ENCODE measurements at regions of chr22 and their contacts with region 1.

Region 1: DNA sequence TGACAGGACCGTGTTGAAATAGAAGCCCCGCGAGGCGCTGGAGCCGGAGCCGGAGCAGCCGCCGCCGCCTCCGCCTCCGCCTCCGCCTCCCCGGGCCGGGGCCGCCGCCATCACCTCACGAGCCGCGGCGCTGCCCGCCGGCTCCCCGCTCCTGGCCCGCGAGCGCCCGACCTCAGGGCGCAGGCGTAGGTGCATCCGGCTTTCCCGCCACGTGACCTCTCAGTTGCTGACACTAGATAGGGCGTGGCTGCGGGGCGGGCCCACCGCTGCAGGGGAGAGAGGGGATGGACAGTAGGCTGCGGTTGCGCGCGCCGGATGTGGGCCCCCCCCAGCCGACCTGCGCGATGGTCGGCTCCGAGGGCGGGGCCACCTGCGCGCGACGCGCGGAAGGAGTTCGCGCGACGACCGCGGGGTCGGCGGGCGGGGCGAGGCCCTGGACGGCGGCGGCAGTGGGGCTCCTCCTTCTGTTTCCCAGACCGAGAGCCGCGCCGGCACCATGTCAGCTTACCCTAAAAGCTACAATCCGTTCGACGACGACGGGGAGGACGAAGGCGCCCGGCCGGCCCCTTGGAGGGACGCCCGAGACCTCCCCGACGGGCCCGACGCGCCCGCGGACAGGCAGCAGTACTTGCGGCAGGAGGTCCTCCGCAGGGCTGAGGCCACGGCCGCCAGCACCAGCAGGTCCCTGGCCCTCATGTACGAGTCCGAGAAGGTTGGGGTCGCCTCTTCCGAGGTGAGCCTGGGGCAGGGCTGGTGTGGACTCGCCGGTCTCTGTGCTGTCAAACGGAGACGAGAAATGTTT is at the starts of genes PI4KA and SNAP29:
- DNase-seq: peak; percentile 100
- ATAC-seq: peak; percentile 92
- H3K4me3 ChIP-seq: peak within 1 kb of the TSS; percentile 57
- H3K27ac ChIP-seq: peak within 1 kb of the TSS; percentile 79
- H3K4me1 ChIP-seq: peaks cover 53 to 78% of the 10 kb centered on the region in 2 experiments
- H3K27me3 ChIP-seq: no peaks in the 10 kb centered on the region
- CTCF ChIP-seq: peak in 1 of 3 experiments; percentile 42; a peak in 2 of 6 replicates
- EP300 ChIP-seq: peak; percentile 84
- POLR2A ChIP-seq: no peak
- RAD21 ChIP-seq: no peak
- polyA plus RNA-seq, gene PI4KA: 7.3 to 11.1 TPM
- polyA plus RNA-seq, gene SNAP29: 19.5 to 22.8 TPM

Region 2: DNA sequence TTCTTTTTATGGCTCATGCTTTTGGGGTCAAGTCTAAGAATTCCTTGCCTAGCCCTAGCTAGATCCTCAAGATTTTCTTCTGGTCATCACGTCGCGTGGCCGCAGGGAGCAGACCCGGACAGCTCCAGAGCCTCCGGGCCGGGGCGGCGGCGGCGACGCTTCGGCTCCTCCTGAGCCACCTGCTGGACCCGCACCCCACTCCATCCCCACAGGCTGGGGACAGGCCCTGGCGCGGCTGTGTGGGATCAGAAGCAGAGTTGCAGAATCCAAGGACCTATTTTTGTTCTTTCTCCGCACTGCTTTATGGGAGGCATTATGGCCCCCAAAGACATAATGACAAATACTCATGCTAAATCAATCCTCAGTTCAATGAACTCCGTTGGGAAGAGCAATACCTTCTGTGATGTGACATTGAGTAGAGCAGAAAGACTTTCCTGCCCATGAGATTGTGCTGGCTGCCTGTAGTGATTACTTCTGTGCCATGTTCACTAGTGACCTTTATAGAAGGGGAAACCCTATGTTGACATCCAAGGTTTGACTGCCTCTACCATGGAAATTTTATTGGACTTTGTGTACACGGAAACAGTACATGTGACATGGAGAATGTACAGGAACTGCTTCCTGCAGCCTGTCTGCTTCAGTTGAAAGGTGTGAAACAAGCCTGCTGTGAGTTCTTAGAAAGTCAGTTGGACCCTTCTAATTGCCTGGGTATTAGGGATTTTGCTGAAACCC is 408.8 kb before region 1 on chr22:
- CTCF ChIA-PET with region 1: no interaction called
- POLR2A ChIA-PET with region 1: no interaction called
- in situ Hi-C with region 1: no loop called
- intact Hi-C with region 1: no loop called
- DNase-seq: no peak
- ATAC-seq: peak; percentile 17; the same call in 1 of the 3 replicates
- H3K4me3 ChIP-seq: no peak overlapping the region
- H3K27ac ChIP-seq: no peak overlapping the region
- H3K4me1 ChIP-seq: peaks cover 0 to 6% of the 10 kb centered on the region in 2 experiments; a peak in 1 of 5 replicates
- H3K27me3 ChIP-seq: peaks cover 26 to 41% of the 10 kb centered on the region in 2 experiments; a peak in 4 of 5 replicates
- CTCF ChIP-seq: 0 out of 6 replicates have a peak, but pooled peaks of 1 of the 3 experiments have one; percentile 10
- EP300 ChIP-seq: no peak
- POLR2A ChIP-seq: no peak
- RAD21 ChIP-seq: no peak

Region 3: DNA sequence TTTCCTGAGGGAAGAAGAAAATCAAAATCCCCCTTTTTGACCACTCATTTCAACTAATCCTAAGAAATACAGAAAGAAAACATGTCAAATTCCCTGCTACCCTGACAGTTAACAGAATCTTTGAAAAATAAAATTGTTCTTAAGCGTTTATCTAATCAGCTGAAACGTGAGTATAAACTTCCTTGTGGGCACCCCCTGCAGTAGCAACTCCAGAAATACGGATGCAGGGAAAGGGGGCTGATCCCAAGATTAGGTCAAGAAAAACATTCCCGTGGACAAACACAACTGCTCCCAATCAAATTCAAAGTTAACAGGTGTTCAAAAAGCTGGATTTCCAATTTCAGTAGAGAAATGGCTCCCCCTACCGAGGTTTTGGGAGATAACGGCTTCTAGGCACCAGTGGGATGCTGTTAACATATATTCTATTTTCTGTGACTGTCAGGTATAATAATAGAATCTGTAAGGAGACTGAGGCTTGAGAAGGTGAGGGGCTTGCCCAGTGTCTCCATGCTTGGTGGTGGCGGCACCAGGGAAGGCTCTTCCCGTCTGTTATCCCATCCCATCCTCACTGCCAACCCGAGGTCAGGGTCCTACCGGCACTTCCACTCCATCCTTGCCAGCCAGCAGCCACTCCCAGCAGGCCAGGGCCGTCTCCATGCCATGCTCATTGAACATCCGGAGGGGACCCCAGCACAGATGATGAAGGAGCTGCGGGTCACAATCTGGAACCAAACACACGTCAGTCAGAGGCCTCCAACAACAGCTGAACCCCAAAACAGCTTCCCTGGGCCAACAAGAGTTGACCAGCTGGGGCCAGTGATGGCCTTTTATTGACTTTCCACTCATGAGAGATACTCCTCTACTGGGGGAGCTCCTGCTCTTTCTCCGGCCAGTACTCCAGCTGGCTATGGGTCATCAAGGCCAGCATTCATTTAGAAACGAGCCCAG is 116.9 kb before region 1 on chr22:
- CTCF ChIA-PET with region 1: no interaction called
- POLR2A ChIA-PET with region 1: no interaction called
- in situ Hi-C with region 1: no loop called
- intact Hi-C with region 1: no loop called
- DNase-seq: peak; percentile 87 to 93 (median 90)
- ATAC-seq: peak; percentile 78
- H3K4me3 ChIP-seq: no peak overlapping the region
- H3K27ac ChIP-seq: no peak overlapping the region
- H3K4me1 ChIP-seq: no peaks in the 10 kb centered on the region
- H3K27me3 ChIP-seq: no peaks in the 10 kb centered on the region
- CTCF ChIP-seq: peak; percentile 94 to 100 (median 99)
- EP300 ChIP-seq: no peak
- POLR2A ChIP-seq: no peak
- RAD21 ChIP-seq: peak; percentile 54 to 86

Region 4: GRCh38 chr22:20803696-20804324 is 55.0 kb before region 1 on chr22:
- CTCF ChIA-PET with region 1: no interaction called
- POLR2A ChIA-PET with region 1: no interaction called
- in situ Hi-C with region 1: no loop called
- intact Hi-C with region 1: no loop called
- DNase-seq: peak; percentile 78 to 84 (median 84)
- ATAC-seq: peak; percentile 89
- H3K4me3 ChIP-seq: no peak overlapping the region
- H3K27ac ChIP-seq: no peak overlapping the region
- H3K4me1 ChIP-seq: peaks cover 3 to 13% of the 10 kb centered on the region in 2 experiments; a peak in 3 of 5 replicates
- H3K27me3 ChIP-seq: no peaks in the 10 kb centered on the region
- CTCF ChIP-seq: peak; percentile 94 to 100 (median 98)
- EP300 ChIP-seq: no peak
- POLR2A ChIP-seq: no peak
- RAD21 ChIP-seq: peak; percentile 95 to 99

Region 5: GRCh38 chr22:20833225-20833665 is 25.6 kb before region 1 on chr22:
- CTCF ChIA-PET with region 1: no interaction called
- POLR2A ChIA-PET with region 1: interaction called, 12 read pairs
- in situ Hi-C with region 1: no loop called
- intact Hi-C with region 1: no loop called
- DNase-seq: peak in 2 of 4 experiments; percentile 22 to 46
- ATAC-seq: no peak
- H3K4me3 ChIP-seq: no peak overlapping the region
- H3K27ac ChIP-seq: no peak overlapping the region
- H3K4me1 ChIP-seq: peaks cover 0 to 3% of the 10 kb centered on the region in 2 experiments; a peak in 1 of 5 replicates
- H3K27me3 ChIP-seq: no peaks in the 10 kb centered on the region
- CTCF ChIP-seq: no peak
- EP300 ChIP-seq: no peak
- POLR2A ChIP-seq: no peak
- RAD21 ChIP-seq: no peak

Region 6: GRCh38 chr22:20840646-20841371 is 18.0 kb before region 1 on chr22:
- CTCF ChIA-PET with region 1: no interaction called
- POLR2A ChIA-PET with region 1: interaction called, 37 read pairs
- in situ Hi-C with region 1: no loop called
- intact Hi-C with region 1: loop called (anchors 2 kb)
- DNase-seq: peak in 3 of 4 experiments; percentile 43 to 78 (median 51)
- ATAC-seq: peak; percentile 46
- H3K4me3 ChIP-seq: no peak overlapping the region
- H3K27ac ChIP-seq: no peak overlapping the region
- H3K4me1 ChIP-seq: peaks cover 17 to 33% of the 10 kb centered on the region in 2 experiments
- H3K27me3 ChIP-seq: no peaks in the 10 kb centered on the region; a peak in 1 of 5 replicates
- CTCF ChIP-seq: no peak
- EP300 ChIP-seq: no peak
- POLR2A ChIP-seq: no peak
- RAD21 ChIP-seq: no peak

Region 7: DNA sequence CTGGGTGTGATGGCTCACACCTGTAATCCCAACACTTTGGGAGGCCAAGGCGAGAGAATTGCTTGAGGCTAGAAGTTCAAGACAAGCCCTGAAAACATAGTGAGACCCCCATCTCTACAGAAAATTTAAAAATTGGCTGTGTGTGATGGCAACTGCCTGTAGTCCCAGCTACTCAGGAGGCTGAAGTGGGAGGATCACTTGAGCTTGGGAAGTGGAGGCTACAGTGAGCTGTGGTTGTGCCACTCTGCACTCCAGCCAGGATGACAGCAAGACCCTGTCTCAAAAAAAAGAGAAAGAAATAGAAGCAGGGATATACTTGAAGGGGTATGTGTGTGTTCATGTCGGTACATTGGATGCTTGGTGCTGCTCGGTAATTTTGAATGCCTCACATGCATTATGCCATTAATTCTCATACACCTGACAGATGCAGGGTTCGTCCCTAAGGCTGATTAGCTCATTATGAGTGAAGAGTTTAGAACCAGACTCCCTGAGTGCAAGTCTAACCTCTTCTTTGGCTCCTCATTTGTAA is 72.4 kb after region 1 on chr22:
- CTCF ChIA-PET with region 1: no interaction called
- POLR2A ChIA-PET with region 1: no interaction called
- in situ Hi-C with region 1: no loop called
- intact Hi-C with region 1: no loop called
- DNase-seq: peak in 1 of 4 experiments; percentile 38
- ATAC-seq: no peak
- H3K4me3 ChIP-seq: no peak overlapping the region
- H3K27ac ChIP-seq: no peak overlapping the region
- H3K4me1 ChIP-seq: peaks cover 8 to 9% of the 10 kb centered on the region in 2 experiments; a peak in 4 of 5 replicates
- H3K27me3 ChIP-seq: no peaks in the 10 kb centered on the region
- CTCF ChIP-seq: no peak
- EP300 ChIP-seq: no peak
- POLR2A ChIP-seq: no peak
- RAD21 ChIP-seq: no peak

Region 8: GRCh38 chr22:21652010-21652546 is 793.3 kb after region 1 on chr22:
- CTCF ChIA-PET with region 1: no interaction called
- POLR2A ChIA-PET with region 1: no interaction called
- in situ Hi-C with region 1: no loop called
- intact Hi-C with region 1: loop called (anchors 10 kb)
- DNase-seq: peak; percentile 100
- ATAC-seq: peak; percentile 94
- H3K4me3 ChIP-seq: peak overlapping the region; percentile 47
- H3K27ac ChIP-seq: peak overlapping the region; percentile 69
- H3K4me1 ChIP-seq: peaks cover 35 to 42% of the 10 kb centered on the region in 2 experiments
- H3K27me3 ChIP-seq: no peaks in the 10 kb centered on the region
- CTCF ChIP-seq: no peak
- EP300 ChIP-seq: peak; percentile 33; the same call in 1 of the 2 replicates
- POLR2A ChIP-seq: no peak
- RAD21 ChIP-seq: no peak